Esophagus muscularis mucosa (tissue), 4 donors: ENCODE measurements at regions of chr15 and their contacts with region 1.

Region 1: DNA sequence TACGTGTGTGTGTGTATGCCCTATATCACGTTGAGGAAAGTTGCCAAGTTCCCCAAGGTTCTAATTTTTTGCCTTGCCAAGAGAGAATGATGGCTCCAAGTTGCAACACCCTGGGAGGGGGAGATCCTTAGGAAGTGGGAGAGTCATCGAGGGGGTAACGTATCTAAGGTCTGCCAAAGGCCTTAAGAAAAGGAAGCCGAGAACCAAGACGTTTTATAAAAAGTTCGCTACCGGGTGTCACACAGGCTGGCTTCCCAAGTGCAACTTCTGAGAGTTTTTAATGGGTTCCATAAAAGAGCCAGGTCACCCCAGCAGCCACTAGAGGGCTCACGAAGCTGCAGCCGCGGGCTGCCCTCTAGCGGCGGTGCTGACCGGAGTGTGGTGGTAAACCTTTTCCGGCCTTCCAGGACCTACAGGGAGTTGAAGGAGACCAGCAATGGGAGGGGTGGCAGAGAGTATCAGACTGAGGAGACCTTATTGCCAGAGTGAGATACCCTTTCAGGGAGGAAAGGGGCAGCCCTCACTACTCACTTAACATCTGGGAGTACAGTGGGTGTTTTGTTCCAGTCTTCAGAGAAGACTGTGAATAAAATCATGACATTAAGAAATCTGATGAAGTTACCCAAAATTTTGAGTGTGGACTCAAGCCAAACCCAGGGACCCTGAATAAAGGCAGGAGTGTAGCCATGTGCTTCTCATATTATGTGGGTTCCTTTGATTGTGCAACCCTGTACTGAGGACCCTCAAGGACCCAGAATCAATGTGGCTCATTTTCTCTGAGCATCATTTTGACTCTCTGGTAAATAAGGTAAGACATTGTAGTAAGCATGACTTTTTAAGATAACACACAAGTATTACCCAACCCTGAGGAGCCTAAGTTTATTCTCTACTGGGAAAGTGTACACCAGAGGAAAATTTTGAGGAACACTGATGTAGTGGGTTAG is 2.5 kb upstream of the RFX7 start:
- DNase-seq: peak; percentile 93
- H3K4me3 ChIP-seq: peak overlapping the region; percentile 32 to 51 (median 39)
- H3K27ac ChIP-seq: peak overlapping the region; percentile 47 to 87 (median 64)
- H3K4me1 ChIP-seq: peaks cover 24 to 42% (median 36%) of the 10 kb centered on the region in 4 donors
- H3K27me3 ChIP-seq: no peaks in the 10 kb centered on the region
- CTCF ChIP-seq: peak; percentile 98 to 99 (median 98)
- EP300 ChIP-seq: no peak
- POLR2A ChIP-seq: no peak

Region 2: DNA sequence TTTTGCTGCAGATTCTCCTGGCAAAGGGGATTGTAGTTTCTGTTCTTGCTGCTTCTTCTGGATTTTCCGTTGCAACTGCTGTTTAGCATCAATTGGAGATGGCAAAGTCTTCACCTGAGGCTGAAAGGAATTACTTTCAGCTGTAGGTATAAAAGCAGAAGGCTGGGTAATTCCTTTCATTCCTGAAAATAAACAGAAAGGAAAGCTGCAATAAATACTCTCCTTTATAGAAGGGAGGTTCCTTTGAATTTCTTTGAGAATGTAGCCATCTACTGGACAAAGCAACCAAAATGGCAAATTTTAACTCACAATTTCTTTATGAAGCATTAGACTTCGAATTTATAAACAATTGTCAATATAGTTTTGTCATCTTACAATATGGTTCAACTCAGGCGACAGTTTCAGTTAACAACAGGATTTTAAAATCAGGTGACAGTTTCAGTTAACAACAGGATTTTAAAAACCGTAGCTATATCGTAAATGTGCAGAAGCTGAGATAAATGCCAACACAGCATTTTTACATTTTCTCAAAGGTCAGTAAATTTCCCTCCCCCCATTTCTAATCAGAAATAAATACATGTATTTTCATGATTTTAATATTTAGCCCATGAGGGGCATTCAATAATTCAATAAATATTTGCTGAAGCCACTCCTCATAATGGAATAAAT is 147.8 kb before region 1 on chr15:
- intact Hi-C with region 1: loop called (anchors 10 kb)
- DNase-seq: no peak
- H3K4me3 ChIP-seq: no peak overlapping the region
- H3K27ac ChIP-seq: no peak overlapping the region
- H3K4me1 ChIP-seq: peaks cover 3 to 19% (median 13%) of the 10 kb centered on the region in 4 donors
- H3K27me3 ChIP-seq: no peaks in the 10 kb centered on the region
- CTCF ChIP-seq: no peak
- EP300 ChIP-seq: no peak
- POLR2A ChIP-seq: no peak

Region 3: DNA sequence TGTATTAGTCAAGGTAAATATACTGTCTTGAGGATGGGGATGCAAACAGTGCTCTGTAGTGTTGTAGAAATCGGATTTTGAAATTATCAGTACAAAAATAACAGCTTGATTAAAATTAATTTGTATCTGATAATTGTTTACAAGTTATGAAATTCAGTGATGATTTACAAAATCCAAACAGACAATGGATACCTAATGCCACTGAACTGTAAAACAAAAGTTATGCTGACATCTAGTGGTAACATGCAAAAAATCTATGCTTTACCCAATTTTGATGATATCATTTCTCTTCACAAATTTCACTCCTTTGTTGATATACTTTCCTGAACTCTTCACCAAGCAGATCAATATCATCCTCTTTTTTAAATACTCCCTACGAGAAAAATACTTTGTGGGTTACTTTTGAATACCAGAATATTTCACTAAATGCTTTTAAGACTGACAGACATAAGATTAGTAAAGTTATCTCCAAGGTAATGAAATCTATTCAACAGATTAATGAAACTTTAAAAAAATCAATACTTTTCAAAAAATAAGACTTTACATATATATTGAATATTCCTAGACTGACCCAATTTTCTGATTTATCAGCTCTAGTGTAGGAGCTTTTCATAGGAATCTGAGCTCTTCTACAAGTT is 182.8 kb after region 1 on chr15:
- intact Hi-C with region 1: loop called (anchors 10 kb)
- DNase-seq: no peak
- H3K4me3 ChIP-seq: no peak overlapping the region
- H3K27ac ChIP-seq: no peak overlapping the region
- H3K4me1 ChIP-seq: no peaks in the 10 kb centered on the region
- H3K27me3 ChIP-seq: no peaks in the 10 kb centered on the region
- CTCF ChIP-seq: peak in 2 of 3 experiments; percentile 39 to 45
- EP300 ChIP-seq: no peak
- POLR2A ChIP-seq: no peak